Natural killer cell (primary cell): ENCODE measurements at regions of chr7 and their contacts with region 1.

Region 1: DNA sequence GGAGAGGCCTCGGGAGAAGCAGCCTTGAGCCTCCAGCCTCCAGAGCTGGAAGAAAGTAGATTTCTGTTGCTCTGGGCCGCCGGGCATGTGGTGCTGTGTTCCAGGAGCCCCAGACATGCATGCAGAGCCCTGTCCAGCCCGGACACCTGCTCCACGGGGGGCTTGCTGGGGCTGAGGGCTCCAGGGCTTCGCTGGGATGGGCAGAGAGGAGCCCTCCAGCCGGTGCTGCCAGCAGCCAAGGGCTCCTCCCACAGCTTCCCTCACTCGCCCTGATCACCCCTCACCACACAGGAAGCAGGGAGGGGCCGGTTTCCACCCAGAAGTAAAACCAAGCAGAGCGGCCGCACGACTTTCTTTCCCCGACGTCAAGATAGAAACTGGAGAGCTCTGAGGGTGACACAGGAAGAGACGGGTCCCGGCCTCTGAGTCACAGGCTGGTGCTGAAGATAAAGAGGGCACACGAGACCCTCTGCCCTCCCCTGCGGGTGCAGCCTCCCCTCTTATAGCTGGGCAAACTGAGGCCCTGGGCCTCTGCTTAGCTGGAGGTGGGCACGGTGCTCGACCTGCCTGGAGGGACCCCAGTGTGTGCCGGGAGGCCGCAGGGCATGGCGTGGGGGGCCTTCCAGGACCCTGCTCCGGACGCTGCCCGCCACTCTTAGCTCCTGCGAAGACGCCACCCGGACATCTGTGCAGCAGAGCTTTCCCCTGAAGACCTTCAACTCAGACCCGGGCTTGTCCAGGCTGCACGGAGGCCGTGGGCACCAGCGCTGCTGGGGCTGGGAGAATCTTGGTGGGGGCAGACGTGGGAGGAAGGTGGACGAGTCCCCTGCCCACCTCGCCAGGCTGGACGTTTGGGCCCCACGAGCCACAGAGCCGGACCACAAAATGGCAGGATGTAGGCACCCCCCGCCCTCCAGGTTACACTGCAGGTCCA is 31.1 kb downstream of the ADAP1 start:
- DNase-seq: peak; percentile 86 to 96
- ATAC-seq: peak; percentile 60 to 87 (median 82)
- H3K4me3 ChIP-seq: peak overlapping the region; percentile 52
- H3K4me3 Mint-ChIP-seq: peak overlapping the region; percentile 92
- H3K27ac ChIP-seq: peak overlapping the region; percentile 93
- H3K27ac Mint-ChIP-seq: peak overlapping the region; percentile 93 to 95
- H3K4me1 ChIP-seq: peaks cover 80% of the 10 kb centered on the region
- H3K4me1 Mint-ChIP-seq: peaks cover 50 to 61% of the 10 kb centered on the region in 2 donors
- H3K27me3 ChIP-seq: no peaks in the 10 kb centered on the region
- H3K27me3 Mint-ChIP-seq: no peaks in the 10 kb centered on the region
- CTCF ChIP-seq: no peak

Region 2: DNA sequence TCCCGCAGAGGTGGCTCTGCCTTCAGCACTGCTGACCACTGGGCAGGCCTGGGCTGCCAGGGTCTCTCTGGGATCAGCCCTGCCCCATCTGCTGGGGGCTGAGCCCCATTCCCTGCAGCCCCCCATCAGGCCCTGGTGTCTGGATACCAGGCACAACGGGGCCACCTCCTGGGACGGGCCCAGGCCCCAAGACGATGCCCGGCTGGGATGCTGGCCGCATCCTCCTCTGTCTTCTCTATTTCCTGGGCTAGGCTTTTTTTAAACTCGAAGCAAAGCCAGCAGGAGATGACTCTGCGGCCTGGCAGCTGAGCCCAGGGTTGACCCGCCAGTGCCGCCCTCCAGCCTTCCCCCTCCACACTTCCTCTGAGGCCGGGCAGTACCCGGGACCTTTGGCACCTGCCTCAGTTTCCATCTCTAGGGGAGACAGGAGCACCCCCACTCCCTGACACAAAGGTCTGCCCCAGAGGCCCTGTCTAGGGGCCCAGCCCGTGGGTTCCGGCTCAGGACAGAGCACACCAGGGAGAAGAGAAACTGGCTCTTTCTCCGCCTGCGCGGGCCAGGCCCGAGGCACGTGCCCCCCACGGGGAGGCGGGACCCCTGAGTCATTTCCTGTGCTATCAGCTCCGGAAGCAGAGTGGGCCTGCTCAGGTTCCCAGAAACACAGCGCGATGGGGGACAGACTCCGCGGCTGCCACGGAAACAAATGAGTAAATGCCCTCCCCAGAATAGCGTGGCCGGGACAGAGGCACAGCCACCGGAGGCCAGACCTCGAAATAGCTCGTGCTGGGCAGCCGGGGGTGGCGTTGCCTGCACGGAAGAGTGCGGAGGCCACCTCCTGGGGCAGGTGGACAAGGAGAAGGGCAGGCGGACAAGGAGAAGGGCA is 319.1 kb before region 1 on chr7:
- intact Hi-C with region 1: loop called (anchors 5 kb)
- DNase-seq: peak; percentile 93 to 96
- ATAC-seq: peak; percentile 61 to 89 (median 78)
- H3K4me3 ChIP-seq: peak overlapping the region; percentile 41
- H3K4me3 Mint-ChIP-seq: peak overlapping the region; percentile 98
- H3K27ac ChIP-seq: peak overlapping the region; percentile 98
- H3K27ac Mint-ChIP-seq: peak overlapping the region; percentile 100
- H3K4me1 ChIP-seq: peaks cover 78% of the 10 kb centered on the region
- H3K4me1 Mint-ChIP-seq: peaks cover 25 to 43% of the 10 kb centered on the region in 2 donors
- H3K27me3 ChIP-seq: no peaks in the 10 kb centered on the region
- H3K27me3 Mint-ChIP-seq: no peaks in the 10 kb centered on the region
- CTCF ChIP-seq: no peak

Region 3: GRCh38 chr7:876167-876967 is 47.0 kb before region 1 on chr7 and contains the start of gene GET4:
- intact Hi-C with region 1: loop called (anchors 2 kb)
- DNase-seq: peak; percentile 97 to 98
- ATAC-seq: peak; percentile 80 to 93 (median 82)
- H3K4me3 ChIP-seq: peak within 1 kb of the TSS; percentile 87
- H3K4me3 Mint-ChIP-seq: peak within 1 kb of the TSS; percentile 99
- H3K27ac ChIP-seq: peak within 1 kb of the TSS; percentile 90
- H3K27ac Mint-ChIP-seq: peak within 1 kb of the TSS; percentile 89 to 94
- H3K4me1 ChIP-seq: peaks cover 32% of the 10 kb centered on the region
- H3K4me1 Mint-ChIP-seq: peaks cover 19 to 23% of the 10 kb centered on the region in 2 donors
- H3K27me3 ChIP-seq: no peaks in the 10 kb centered on the region
- H3K27me3 Mint-ChIP-seq: no peaks in the 10 kb centered on the region
- CTCF ChIP-seq: no peak
- total RNA-seq, gene GET4: 69.3 to 81.6 (median 73.2) TPM

Region 4: DNA sequence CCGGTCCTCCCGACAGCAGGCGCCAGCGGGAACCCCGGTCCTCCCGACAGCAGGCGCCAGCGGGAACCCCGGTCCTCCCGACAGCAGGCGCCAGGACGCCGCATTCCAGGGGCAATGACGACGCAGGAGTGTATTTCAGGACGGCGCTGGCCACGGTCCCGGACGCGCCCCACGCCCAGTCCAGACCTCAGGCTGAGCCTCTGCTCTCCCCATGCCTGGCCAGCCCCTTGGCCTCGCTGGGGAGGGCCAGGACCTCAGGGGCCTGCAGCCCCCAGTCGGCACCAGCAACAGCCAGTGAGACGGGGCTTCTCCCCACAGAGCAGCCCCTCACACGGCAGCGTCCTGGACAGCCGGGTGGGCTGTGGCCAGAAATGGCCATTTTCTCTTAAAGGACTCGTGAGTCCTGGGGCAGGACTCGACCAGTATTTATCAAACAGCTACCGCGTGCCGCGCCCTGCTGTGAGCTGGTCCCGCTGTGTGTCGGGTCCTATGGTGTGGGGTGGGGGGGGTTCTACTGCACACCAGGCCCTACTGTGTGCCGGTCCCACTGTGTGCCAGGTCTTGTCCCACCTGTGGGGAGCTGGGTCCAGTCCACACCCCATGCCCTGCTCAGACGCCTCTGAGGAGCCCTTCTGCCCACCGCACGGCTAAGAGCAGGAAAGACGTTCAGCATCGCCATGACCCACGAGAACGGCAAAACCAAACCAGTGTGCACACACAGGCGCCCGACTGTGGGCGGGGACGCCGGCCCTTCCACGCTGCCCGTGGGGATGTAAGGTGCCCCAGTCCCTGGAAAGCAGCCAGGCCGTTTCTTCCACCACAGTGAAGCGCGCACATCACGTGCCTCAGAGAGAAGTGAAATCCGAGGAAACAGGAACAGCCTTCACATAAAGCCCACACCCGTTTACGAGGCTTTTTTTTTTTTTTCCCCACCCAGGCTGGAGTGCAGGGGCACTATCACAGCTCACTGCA is 13.7 kb before region 1 on chr7:
- intact Hi-C with region 1: loop called (anchors 1 kb)
- DNase-seq: peak in 1 of 2 donors; percentile 51
- ATAC-seq: peak in 1 of 3 donors; percentile 28
- H3K4me3 ChIP-seq: peak overlapping the region; percentile 17
- H3K4me3 Mint-ChIP-seq: peak overlapping the region; percentile 75
- H3K27ac ChIP-seq: no peak overlapping the region
- H3K27ac Mint-ChIP-seq: peak overlapping the region; percentile 54 to 60
- H3K4me1 ChIP-seq: peaks cover 46% of the 10 kb centered on the region
- H3K4me1 Mint-ChIP-seq: peaks cover 8 to 46% of the 10 kb centered on the region in 2 donors
- H3K27me3 ChIP-seq: no peaks in the 10 kb centered on the region
- H3K27me3 Mint-ChIP-seq: no peaks in the 10 kb centered on the region
- CTCF ChIP-seq: peak; percentile 60

Region 5: GRCh38 chr7:954330-955238 is 31.2 kb after region 1 on chr7 and contains the start of gene ADAP1:
- intact Hi-C with region 1: loop called (anchors 2 kb)
- DNase-seq: peak; percentile 69 to 83
- ATAC-seq: peak; percentile 83 to 84 (median 83)
- H3K4me3 ChIP-seq: peak within 1 kb of the TSS; percentile 33
- H3K4me3 Mint-ChIP-seq: peak within 1 kb of the TSS; percentile 84
- H3K27ac ChIP-seq: peak within 1 kb of the TSS; percentile 41
- H3K27ac Mint-ChIP-seq: peak within 1 kb of the TSS; percentile 26 to 65
- H3K4me1 ChIP-seq: peaks cover 56% of the 10 kb centered on the region
- H3K4me1 Mint-ChIP-seq: peaks cover 11 to 20% of the 10 kb centered on the region in 2 donors
- H3K27me3 ChIP-seq: no peaks in the 10 kb centered on the region
- H3K27me3 Mint-ChIP-seq: no peaks in the 10 kb centered on the region
- CTCF ChIP-seq: peak; percentile 33
- total RNA-seq, gene ADAP1: 87.2 to 117 (median 89.2) TPM

Region 6: DNA sequence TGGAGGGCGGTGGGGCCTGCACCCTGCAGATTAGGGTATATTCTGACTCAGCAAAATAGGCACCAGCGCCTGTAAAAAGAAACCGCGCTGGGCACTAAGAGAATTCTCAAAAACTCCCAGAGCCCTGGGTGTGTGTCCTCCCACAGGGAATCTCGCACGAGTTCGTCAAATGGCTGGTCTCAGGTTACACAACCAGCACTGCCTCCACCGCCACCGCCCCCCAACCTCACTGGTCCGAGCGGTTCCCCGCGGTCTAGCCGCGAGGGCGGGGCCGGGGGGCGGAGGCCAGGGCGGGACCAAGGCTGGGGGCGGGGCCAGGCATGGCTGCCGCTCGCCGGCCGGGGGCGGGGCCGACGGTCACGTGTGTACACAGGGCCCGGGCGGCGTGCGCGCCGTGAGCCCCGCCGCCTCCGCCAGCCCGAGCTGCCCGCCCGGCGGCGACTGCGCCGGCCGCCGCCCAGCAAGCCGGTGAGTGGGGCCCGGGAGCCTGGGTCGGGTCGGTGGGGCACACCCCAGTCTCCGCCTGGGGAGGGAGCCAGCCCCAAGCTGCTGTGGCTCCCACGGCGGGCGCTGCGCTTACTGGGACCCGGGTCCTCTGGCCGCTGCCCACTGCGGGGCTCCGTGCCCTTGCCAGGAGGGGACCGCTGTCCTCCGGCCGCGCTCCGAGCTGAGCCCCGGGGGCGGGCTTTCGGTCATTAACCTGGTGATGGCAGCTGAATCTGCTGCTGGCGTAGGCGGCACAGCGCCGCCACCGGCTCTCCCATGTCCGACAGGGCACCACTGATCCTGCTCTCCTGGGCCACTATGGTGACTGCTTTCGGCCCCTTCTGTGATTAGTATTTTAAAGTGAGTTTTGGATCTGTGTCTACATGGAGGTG is 121.1 kb after region 1 on chr7 and contains the start of gene GPR146:
- intact Hi-C with region 1: loop called (anchors 5 kb)
- DNase-seq: peak; percentile 86 to 93
- ATAC-seq: peak; percentile 69 to 94 (median 80)
- H3K4me3 ChIP-seq: peak within 1 kb of the TSS; percentile 49
- H3K4me3 Mint-ChIP-seq: peak within 1 kb of the TSS; percentile 90
- H3K27ac ChIP-seq: peak within 1 kb of the TSS; percentile 23
- H3K27ac Mint-ChIP-seq: peak within 1 kb of the TSS; percentile 54 to 58
- H3K4me1 ChIP-seq: peaks cover 59% of the 10 kb centered on the region
- H3K4me1 Mint-ChIP-seq: peaks cover 39 to 47% of the 10 kb centered on the region in 2 donors
- H3K27me3 ChIP-seq: peaks cover 9% of the 10 kb centered on the region
- H3K27me3 Mint-ChIP-seq: peaks cover 0 to 9% of the 10 kb centered on the region in 2 donors
- CTCF ChIP-seq: peak; percentile 62
- total RNA-seq, gene GPR146: 2.3 to 4.5 (median 2.5) TPM

Region 7: GRCh38 chr7:1368682-1369571 is 445.6 kb after region 1 on chr7:
- intact Hi-C with region 1: no loop called
- DNase-seq: peak in 1 of 2 donors; percentile 41
- ATAC-seq: peak in 2 of 3 donors; percentile 42 to 54
- H3K4me3 ChIP-seq: no peak overlapping the region
- H3K4me3 Mint-ChIP-seq: no peak overlapping the region
- H3K27ac ChIP-seq: no peak overlapping the region
- H3K27ac Mint-ChIP-seq: no peak overlapping the region
- H3K4me1 ChIP-seq: no peaks in the 10 kb centered on the region
- H3K4me1 Mint-ChIP-seq: peaks cover 0 to 5% of the 10 kb centered on the region in 2 donors
- H3K27me3 ChIP-seq: peaks cover 18% of the 10 kb centered on the region
- H3K27me3 Mint-ChIP-seq: peaks cover 18 to 28% of the 10 kb centered on the region in 2 donors
- CTCF ChIP-seq: no peak

Region 8: DNA sequence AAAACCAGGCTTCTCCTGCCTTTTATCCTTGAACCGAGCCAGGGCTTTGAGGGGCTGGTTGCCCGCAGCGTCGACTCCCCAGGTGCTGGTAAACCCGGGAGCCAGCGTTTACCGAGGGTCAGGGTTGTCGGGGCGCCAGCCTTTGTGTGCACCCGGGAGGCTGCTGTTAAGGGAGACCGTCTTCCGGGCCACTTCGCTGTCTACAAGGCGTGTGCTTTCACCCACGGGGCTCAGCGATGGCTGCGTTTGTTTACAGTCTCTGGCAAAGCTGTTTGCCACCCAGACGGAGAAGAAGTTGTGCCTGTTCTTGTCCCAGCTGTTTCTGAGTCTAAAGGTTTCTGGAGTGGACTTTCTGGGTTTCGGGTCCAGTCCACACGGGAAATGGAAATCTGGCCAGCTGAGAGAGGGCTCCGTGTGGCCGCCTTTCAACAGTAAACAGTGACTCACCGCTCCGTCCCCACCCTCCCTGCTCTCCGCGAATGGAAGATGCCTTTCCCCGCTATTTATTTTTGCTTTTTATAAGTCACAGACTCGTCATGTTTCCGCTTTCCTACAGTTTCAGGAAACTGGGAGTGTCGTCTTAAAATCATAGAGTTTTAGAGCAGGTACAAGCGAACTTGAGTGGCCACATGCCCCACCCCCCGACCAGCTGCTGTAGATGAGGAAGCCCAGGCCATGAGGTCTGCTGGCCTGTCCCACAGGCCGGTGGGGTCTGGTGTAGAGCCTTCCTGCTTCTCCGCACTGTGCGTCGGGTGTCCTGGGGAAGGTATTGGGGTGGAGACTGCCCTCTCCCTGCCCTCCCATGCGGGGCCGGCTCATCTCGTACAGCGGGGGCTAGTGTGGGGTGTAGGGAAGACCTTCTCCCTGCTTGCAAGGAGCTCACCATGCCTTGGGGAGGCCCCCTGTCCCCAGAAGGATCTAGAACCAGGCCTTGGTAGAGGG is 609.4 kb after region 1 on chr7:
- intact Hi-C with region 1: loop called (anchors 5 kb)
- DNase-seq: peak; percentile 60 to 76
- ATAC-seq: peak; percentile 52 to 61 (median 53)
- H3K4me3 ChIP-seq: peak overlapping the region; percentile 55
- H3K4me3 Mint-ChIP-seq: peak overlapping the region; percentile 93
- H3K27ac ChIP-seq: peak overlapping the region; percentile 89
- H3K27ac Mint-ChIP-seq: peak overlapping the region; percentile 94 to 96
- H3K4me1 ChIP-seq: peaks cover 43% of the 10 kb centered on the region
- H3K4me1 Mint-ChIP-seq: peaks cover 19 to 27% of the 10 kb centered on the region in 2 donors
- H3K27me3 ChIP-seq: no peaks in the 10 kb centered on the region
- H3K27me3 Mint-ChIP-seq: no peaks in the 10 kb centered on the region
- CTCF ChIP-seq: no peak